ENCODE measurements at regions of chr5 and their contacts with region 1.

Region 1: DNA sequence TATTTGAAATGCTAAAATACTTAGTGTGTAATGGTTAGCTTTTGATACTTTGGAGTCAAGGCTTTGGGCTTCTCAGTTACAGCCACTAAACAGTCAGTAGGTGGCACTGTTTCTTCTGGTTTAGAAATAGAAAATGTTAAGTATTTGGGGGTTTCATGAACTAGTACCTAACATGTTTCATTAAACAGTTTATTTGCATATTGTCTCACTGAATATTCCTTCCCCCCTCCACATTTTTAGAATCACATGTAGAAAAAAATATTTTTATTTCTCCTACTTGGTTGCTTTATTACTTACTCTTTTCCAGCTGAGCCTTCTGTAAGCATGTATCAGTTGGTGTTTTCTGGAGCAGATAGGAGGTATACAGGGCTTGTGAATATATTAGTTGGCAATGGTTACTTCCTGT is 48.0 kb downstream of the IPO11 start:
- DNase-seq: no peak
- H3K4me3 Mint-ChIP-seq: no peak overlapping the region
- H3K27ac Mint-ChIP-seq: no peak overlapping the region
- H3K4me1 Mint-ChIP-seq: peaks cover 2% of the 10 kb centered on the region
- H3K27me3 Mint-ChIP-seq: no peaks in the 10 kb centered on the region

Region 2: GRCh38 chr5:62431735-62432620 is 28.6 kb before region 1 on chr5:
- CTCF ChIA-PET with region 1: interaction called, 14 read pairs
- intact Hi-C with region 1: no loop called
- DNase-seq: no peak
- H3K4me3 Mint-ChIP-seq: no peak overlapping the region
- H3K27ac Mint-ChIP-seq: no peak overlapping the region
- H3K4me1 Mint-ChIP-seq: peaks cover 24% of the 10 kb centered on the region
- H3K27me3 Mint-ChIP-seq: no peaks in the 10 kb centered on the region

Region 3: GRCh38 chr5:62448528-62448927 is 12.1 kb before region 1 on chr5:
- CTCF ChIA-PET with region 1: interaction called, 17 read pairs
- intact Hi-C with region 1: no loop called
- DNase-seq: no peak
- H3K4me3 Mint-ChIP-seq: no peak overlapping the region
- H3K27ac Mint-ChIP-seq: no peak overlapping the region
- H3K4me1 Mint-ChIP-seq: no peaks in the 10 kb centered on the region
- H3K27me3 Mint-ChIP-seq: no peaks in the 10 kb centered on the region

Region 4: DNA sequence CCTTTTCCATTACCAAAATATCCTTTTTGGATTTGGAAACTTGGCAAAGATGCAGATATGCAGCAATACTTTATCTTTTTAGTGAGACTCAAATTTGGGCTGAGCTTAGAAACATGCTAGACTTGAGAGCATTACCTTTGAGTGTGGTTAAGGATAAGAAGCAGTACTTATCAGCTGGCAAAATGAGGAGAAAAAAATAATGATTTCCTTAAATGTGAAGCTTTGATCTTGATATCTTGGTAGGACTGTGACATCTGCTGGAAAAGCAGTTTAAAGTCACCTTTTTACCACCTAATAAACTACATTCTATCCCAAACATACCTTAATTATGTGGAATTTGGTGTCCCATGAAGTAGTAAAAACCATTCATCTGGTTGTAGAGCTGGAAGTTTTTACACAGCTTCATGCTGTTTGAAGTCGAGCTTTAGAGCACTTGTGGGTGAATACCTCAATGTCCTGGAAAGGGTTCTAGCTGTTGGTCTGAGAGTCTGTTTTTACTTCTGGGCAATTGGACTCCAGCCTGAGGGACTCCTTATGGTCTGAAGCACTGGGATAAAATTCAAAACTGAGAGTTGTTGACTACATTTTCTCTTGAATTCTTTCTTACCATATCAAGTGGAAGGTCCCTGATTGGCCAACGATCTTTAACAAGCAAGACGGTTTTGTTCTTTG is 171.5 kb after region 1 on chr5:
- CTCF ChIA-PET with region 1: interaction called, 3 read pairs
- intact Hi-C with region 1: loop called (anchors 5 kb)
- DNase-seq: no peak
- H3K4me3 Mint-ChIP-seq: no peak overlapping the region
- H3K27ac Mint-ChIP-seq: no peak overlapping the region
- H3K4me1 Mint-ChIP-seq: no peaks in the 10 kb centered on the region
- H3K27me3 Mint-ChIP-seq: no peaks in the 10 kb centered on the region

Region 5: GRCh38 chr5:62680121-62680520 is 219.5 kb after region 1 on chr5:
- CTCF ChIA-PET with region 1: no interaction called
- intact Hi-C with region 1: no loop called
- DNase-seq: no peak
- H3K4me3 Mint-ChIP-seq: no peak overlapping the region
- H3K27ac Mint-ChIP-seq: no peak overlapping the region
- H3K4me1 Mint-ChIP-seq: no peaks in the 10 kb centered on the region
- H3K27me3 Mint-ChIP-seq: no peaks in the 10 kb centered on the region

Region 6: GRCh38 chr5:62720031-62720441 is 259.5 kb after region 1 on chr5:
- CTCF ChIA-PET with region 1: no interaction called
- intact Hi-C with region 1: loop called (anchors 5 kb)
- DNase-seq: peak; percentile 30
- H3K4me3 Mint-ChIP-seq: no peak overlapping the region
- H3K27ac Mint-ChIP-seq: no peak overlapping the region
- H3K4me1 Mint-ChIP-seq: no peaks in the 10 kb centered on the region
- H3K27me3 Mint-ChIP-seq: peaks cover 4% of the 10 kb centered on the region

Region 7: GRCh38 chr5:62779010-62779422 is 318.4 kb after region 1 on chr5:
- CTCF ChIA-PET with region 1: interaction called, 6 read pairs
- intact Hi-C with region 1: loop called (anchors 1 kb)
- DNase-seq: no peak
- H3K4me3 Mint-ChIP-seq: no peak overlapping the region
- H3K27ac Mint-ChIP-seq: no peak overlapping the region
- H3K4me1 Mint-ChIP-seq: no peaks in the 10 kb centered on the region
- H3K27me3 Mint-ChIP-seq: no peaks in the 10 kb centered on the region

Region 8: DNA sequence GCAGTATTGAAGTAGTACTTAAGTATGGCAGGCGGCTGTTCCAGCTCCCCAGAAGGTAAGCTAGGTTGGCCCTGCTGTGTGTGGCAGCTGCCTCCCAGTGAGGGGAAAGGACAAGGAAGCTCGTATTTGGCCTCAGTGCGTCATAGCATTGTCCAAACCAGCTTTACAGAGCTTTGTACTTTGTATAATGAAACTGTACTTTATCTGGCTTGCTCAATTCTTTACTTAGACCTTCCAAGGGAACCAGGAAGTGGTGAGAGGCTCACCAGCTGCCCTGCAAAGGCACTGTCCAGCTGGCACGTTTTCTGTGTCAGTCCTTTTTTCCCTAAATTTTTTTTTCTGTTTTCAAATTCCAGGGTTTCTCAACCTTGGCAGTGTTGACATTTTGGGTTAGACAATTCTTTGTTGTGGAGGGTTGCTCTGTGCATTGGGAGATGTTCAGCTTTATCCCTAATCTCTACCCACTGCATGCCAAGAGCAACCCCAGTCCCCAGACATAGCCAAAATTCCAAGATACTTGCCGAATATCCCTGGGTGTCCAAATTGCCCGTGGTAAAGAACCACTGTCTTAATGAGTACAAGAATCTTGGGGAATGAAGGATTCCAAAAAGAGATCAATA is 592.5 kb after region 1 on chr5:
- CTCF ChIA-PET with region 1: no interaction called
- intact Hi-C with region 1: no loop called
- DNase-seq: no peak
- H3K4me3 Mint-ChIP-seq: no peak overlapping the region
- H3K27ac Mint-ChIP-seq: no peak overlapping the region
- H3K4me1 Mint-ChIP-seq: no peaks in the 10 kb centered on the region
- H3K27me3 Mint-ChIP-seq: no peaks in the 10 kb centered on the region

Measured in activated naive CD4-positive, alpha-beta T cell treated with anti-CD3 and anti-CD28 coated beads for 36 hours (primary cell).